Endothelial cell of umbilical vein (primary cell): ENCODE measurements at regions of chr4 and their contacts with region 1.

Region 1: DNA sequence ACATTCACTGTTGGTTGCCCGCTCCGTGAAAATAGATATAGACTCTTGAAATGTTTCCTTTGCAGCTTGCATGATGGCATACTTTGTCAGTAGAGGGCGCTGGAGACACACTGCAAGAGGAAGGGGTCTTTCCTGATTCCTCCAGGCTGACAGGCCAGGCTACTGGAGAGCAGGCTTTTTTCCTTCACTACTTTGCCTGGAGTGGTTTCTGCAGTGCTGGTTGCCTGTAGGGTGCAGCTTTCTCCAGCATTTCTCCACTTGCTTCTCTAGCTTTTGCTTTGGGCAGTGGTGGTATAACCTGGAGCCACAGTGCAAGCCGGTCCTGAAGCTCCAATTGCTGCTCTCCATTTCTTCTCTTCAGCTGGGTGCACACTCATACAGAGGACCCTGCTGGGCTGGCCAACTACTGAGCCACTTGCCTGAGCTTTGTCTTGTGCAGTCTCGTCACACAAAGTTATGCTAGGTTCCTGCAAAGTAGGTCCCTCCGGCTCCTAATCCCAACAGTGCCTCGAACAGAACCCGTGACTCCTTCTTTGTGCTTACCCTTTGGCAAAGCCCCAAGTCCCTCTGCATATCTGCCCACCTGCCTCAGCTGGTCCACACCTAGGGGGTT is 46.3 kb downstream of the RASSF6 start:
- DNase-seq: peak; percentile 73
- H3K4me3 ChIP-seq: no peak overlapping the region
- H3K27ac ChIP-seq: no peak overlapping the region
- H3K4me1 ChIP-seq: no peaks in the 10 kb centered on the region
- H3K27me3 ChIP-seq: no peaks in the 10 kb centered on the region
- CTCF ChIP-seq: peak; percentile 80 to 87
- POLR2A ChIP-seq: no peak

Region 2: DNA sequence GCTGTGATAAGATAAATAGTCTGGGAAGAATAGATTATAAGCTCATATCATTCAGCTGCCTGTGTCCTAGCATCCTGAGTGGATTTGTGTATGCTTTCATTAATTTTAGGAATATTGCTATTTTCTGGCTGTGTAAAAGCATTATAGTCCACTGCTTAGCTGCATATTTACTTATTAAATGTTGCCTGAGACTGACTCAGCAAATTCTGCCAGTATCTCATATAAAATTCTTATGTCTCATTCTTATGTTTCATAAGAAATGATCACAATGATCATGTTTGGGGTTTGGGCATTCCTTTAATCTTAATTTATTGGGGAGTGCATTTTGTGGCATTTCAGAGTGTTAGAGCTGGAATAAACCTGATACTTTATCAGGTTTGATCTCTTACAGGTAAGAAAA is 11.4 kb after region 1 on chr4:
- CTCF ChIA-PET with region 1: interaction called, 11 read pairs
- POLR2A ChIA-PET with region 1: no interaction called
- dilution Hi-C with region 1: no loop called
- intact Hi-C with region 1: no loop called
- DNase-seq: no peak
- H3K4me3 ChIP-seq: no peak overlapping the region
- H3K27ac ChIP-seq: no peak overlapping the region
- H3K4me1 ChIP-seq: no peaks in the 10 kb centered on the region
- H3K27me3 ChIP-seq: no peaks in the 10 kb centered on the region
- CTCF ChIP-seq: no peak
- POLR2A ChIP-seq: no peak

Region 3: GRCh38 chr4:73653695-73654106 is 79.8 kb after region 1 on chr4:
- CTCF ChIA-PET with region 1: interaction called, 51 read pairs
- POLR2A ChIA-PET with region 1: no interaction called
- dilution Hi-C with region 1: no loop called
- intact Hi-C with region 1: loop called (anchors 1 kb)
- DNase-seq: peak; percentile 91
- H3K4me3 ChIP-seq: no peak overlapping the region
- H3K27ac ChIP-seq: no peak overlapping the region
- H3K4me1 ChIP-seq: no peaks in the 10 kb centered on the region
- H3K27me3 ChIP-seq: no peaks in the 10 kb centered on the region
- CTCF ChIP-seq: peak; percentile 33 to 41
- POLR2A ChIP-seq: no peak

Region 4: GRCh38 chr4:73964862-73965611 is 391.1 kb after region 1 on chr4:
- CTCF ChIA-PET with region 1: interaction called, 13 read pairs
- POLR2A ChIA-PET with region 1: no interaction called
- dilution Hi-C with region 1: no loop called
- intact Hi-C with region 1: loop called (anchors 1 kb)
- DNase-seq: peak; percentile 23
- H3K4me3 ChIP-seq: no peak overlapping the region
- H3K27ac ChIP-seq: no peak overlapping the region
- H3K4me1 ChIP-seq: no peaks in the 10 kb centered on the region
- H3K27me3 ChIP-seq: no peaks in the 10 kb centered on the region
- CTCF ChIP-seq: peak; percentile 18 to 48
- POLR2A ChIP-seq: no peak

Region 5: GRCh38 chr4:74311696-74312313 is 737.9 kb after region 1 on chr4:
- CTCF ChIA-PET with region 1: interaction called, 4 read pairs
- POLR2A ChIA-PET with region 1: no interaction called
- dilution Hi-C with region 1: no loop called
- intact Hi-C with region 1: loop called (anchors 5 kb)
- DNase-seq: peak; percentile 70
- H3K4me3 ChIP-seq: no peak overlapping the region
- H3K27ac ChIP-seq: no peak overlapping the region
- H3K4me1 ChIP-seq: no peaks in the 10 kb centered on the region
- H3K27me3 ChIP-seq: no peaks in the 10 kb centered on the region
- CTCF ChIP-seq: peak; percentile 47 to 60
- POLR2A ChIP-seq: no peak